Mammary epithelial cell (primary cell): ENCODE measurements at regions of chr1 and their contacts with region 1.

Region 1: DNA sequence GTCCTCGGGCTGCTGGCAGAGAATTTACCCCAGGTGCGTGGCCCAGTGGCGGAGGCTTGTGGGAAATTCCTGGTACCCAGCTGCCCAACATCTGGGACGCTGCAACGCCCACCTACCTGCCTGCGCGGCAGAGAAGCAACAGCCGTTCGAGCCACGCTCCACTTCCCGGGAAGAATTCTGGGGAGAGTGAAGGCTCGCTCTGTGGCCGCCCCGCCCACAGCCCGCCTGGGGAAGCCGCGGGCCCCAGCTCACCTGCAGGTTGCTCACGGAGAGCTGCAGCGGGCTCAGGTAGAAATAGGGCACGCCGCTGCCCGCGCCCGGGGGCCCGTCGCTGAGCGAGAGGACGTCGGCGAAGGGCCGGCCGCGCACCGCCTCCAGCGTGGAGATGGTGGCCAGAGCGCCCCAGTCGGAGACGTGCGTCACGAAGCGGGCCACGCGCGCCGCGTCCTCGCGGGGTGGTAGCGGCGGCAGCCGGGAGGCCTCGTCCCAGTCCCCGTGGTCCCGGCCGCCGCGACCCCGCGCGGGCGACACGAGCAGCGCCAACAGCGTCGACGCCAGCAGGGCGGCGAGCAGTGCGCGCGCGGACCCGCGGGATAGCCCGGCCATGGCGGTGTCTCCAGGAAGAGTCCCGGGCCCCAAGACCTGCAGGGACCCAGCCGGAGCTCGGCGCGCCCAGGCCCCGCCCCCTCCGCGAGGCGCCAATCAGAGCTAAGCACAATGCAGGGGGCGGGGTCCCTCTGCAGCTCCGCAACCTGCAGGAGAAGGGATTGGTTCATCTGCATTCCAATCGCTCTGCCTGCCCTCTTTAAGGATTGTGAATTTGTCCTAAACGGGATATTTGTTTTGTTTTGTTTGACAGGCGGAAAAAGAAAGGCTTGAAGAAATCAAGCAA is at the start of gene CREG1:
- DNase-seq: peak; percentile 92
- H3K4me3 ChIP-seq: peak within 1 kb of the TSS; percentile 65 to 89 (median 66)
- H3K27ac ChIP-seq: peak within 1 kb of the TSS; percentile 47
- H3K4me1 ChIP-seq: peaks cover 46% of the 10 kb centered on the region
- H3K27me3 ChIP-seq: no peaks in the 10 kb centered on the region
- CTCF ChIP-seq: no peak
- total RNA-seq, gene CREG1: 105 to 242 TPM

Region 2: DNA sequence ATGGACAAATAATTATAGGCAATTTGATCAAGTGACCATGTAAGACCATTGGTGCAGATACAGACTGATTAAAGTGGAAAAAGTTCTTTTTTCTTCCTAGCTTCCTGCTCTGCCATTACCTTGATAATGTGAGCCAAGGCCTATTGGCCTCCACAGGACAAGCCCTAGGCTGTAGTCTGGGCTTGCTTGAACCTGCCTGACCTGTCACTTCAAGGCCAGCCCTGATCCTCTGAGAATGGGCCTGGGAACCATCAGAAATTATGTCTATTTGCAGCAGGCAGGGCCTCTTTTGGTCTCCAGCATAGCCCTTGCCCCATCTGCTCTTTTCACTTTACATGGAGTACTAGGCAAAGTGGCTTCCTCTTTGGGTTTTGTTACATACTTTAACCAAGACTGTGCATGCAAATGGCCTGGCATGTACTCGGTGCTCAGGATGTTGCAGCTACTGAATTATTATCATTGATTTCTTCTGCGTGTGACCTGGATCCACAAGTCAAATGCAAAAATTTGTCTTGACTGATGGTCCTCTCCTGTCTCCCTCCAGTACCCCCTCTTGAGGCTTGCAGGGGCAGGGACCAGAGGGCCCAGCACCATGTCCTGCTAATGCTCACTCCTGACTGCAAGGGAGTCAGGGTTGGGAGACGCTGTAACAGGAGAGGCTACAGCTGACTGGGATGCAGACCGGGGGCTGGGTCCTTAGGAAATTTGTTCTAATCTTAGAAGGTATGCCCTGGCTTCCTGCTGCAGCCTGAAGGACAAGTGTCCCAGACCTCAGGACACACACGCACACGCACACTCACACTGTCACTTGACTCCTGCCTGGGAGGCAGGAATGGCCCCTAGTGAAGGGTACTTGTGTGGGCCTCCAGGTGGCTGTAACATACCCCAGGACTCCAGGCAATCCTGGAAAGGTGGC is 116.1 kb after region 1 on chr1:
- CTCF ChIA-PET with region 1: no interaction called
- dilution Hi-C with region 1: loop called (anchors 5 kb)
- in situ Hi-C with region 1: no loop called
- intact Hi-C with region 1: loop called (anchors 5 kb)
- DNase-seq: no peak
- H3K4me3 ChIP-seq: no peak overlapping the region
- H3K27ac ChIP-seq: no peak overlapping the region
- H3K4me1 ChIP-seq: peaks cover 61% of the 10 kb centered on the region
- H3K27me3 ChIP-seq: no peaks in the 10 kb centered on the region
- CTCF ChIP-seq: no peak